ENCODE measurements at regions of chr7 and their contacts with region 1.

Region 1: GRCh38 chr7:110977127-110977737 is 113.7 kb upstream of the LRRN3 start:
- DNase-seq: no peak
- H3K4me3 Mint-ChIP-seq: peak overlapping the region; percentile 75
- H3K27ac Mint-ChIP-seq: peak overlapping the region; percentile 79
- H3K4me1 Mint-ChIP-seq: peaks cover 41% of the 10 kb centered on the region
- H3K27me3 Mint-ChIP-seq: no peaks in the 10 kb centered on the region

Region 2: DNA sequence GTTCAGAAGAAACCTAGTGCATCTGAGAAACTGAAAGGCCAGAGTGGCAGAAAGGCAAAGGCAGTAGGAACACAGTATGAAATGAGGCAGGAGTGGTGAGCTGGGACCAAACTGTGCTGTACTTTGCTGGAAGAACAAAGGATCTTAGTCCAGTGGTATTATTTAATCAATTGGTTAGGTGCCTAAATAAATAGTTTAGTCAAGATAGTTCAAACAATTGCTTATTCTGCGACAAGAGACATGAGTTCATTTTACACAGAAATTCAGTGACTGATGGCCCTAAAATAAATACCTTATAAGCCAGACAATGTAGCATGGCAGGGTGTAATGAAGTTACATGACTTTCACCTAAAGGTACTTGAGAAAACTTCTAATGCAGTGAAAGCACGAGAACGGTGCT is 68.1 kb before region 1 on chr7:
- intact Hi-C with region 1: loop called (anchors 5 kb)
- DNase-seq: no peak
- H3K4me3 Mint-ChIP-seq: no peak overlapping the region
- H3K27ac Mint-ChIP-seq: no peak overlapping the region
- H3K4me1 Mint-ChIP-seq: peaks cover 31% of the 10 kb centered on the region
- H3K27me3 Mint-ChIP-seq: no peaks in the 10 kb centered on the region

Region 3: DNA sequence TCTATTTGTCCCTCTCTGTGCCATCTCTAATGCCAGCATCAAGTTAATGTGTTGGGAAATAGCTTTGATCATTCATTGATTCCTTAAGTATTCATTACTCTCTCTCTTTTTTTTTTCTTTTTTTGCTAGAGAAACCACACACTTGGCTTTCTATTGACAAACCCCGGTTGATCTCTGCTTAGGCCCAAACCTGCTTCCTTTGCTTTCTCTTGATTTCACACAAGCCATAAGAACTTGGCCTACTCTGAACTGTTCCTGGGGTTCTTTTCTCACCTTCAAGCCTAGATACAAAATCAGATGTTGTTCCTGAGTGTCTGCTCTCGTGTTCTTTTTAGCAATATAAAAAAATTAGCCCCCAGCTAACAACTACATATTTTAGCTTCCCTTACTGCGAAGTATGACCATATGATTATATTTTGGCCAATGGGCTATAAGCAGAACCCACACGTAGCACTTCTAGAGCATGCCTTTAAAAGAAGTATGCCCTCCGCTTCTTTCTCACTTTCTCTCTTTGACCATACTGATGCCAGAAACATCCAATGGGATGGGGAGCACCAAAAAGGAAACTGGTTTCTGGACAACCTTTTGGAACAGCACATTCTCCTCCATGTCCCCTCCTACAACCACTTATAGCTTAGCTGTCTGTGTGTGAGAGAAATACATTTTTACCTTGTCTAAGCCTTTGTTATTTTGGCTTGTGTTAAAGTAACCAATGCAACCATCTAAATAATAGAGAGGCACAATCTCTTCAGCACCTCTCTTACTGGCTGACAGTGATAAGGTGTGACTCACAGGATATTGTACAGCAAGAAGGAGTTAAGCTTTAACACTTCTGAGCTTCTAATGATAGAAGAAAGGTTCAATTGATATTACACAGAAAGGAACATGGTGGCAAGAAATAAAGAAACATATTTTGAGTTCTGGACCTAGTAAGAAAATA is 17.1 kb after region 1 on chr7:
- intact Hi-C with region 1: loop called (anchors 2 kb)
- DNase-seq: no peak
- H3K4me3 Mint-ChIP-seq: no peak overlapping the region
- H3K27ac Mint-ChIP-seq: peak overlapping the region; percentile 13
- H3K4me1 Mint-ChIP-seq: peaks cover 29% of the 10 kb centered on the region
- H3K27me3 Mint-ChIP-seq: no peaks in the 10 kb centered on the region

Region 4: GRCh38 chr7:111083413-111083812 is 106.2 kb after region 1 on chr7:
- intact Hi-C with region 1: loop called (anchors 2 kb)
- DNase-seq: peak; percentile 74
- H3K4me3 Mint-ChIP-seq: peak overlapping the region; percentile 59
- H3K27ac Mint-ChIP-seq: peak overlapping the region; percentile 82
- H3K4me1 Mint-ChIP-seq: peaks cover 84% of the 10 kb centered on the region
- H3K27me3 Mint-ChIP-seq: no peaks in the 10 kb centered on the region

Region 5: DNA sequence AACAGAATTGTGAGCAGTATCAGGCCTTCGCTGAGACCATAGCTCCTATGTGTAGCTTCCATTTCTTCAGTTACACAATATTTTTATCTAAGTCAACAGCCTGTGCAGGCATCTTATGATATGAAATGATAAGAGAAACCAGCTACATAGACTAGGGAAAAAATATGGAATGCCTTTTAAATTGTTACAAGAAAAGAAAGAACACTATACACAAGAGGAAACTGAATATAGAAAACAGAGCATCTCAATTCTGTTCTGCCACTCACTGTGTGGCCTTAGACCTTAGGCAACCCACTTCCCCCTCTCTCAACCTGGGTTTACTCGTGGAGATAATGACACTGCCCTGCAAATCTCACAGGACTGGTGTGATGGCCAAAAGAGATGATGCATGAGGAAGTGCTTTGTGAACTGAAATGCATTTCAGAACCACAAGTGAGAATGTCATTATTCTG is 246.6 kb after region 1 on chr7:
- intact Hi-C with region 1: no loop called
- DNase-seq: no peak
- H3K4me3 Mint-ChIP-seq: no peak overlapping the region
- H3K27ac Mint-ChIP-seq: no peak overlapping the region
- H3K4me1 Mint-ChIP-seq: no peaks in the 10 kb centered on the region
- H3K27me3 Mint-ChIP-seq: no peaks in the 10 kb centered on the region